Endothelial cell of umbilical vein (primary cell): ENCODE measurements at regions of chr5 and their contacts with region 1.

Region 1: DNA sequence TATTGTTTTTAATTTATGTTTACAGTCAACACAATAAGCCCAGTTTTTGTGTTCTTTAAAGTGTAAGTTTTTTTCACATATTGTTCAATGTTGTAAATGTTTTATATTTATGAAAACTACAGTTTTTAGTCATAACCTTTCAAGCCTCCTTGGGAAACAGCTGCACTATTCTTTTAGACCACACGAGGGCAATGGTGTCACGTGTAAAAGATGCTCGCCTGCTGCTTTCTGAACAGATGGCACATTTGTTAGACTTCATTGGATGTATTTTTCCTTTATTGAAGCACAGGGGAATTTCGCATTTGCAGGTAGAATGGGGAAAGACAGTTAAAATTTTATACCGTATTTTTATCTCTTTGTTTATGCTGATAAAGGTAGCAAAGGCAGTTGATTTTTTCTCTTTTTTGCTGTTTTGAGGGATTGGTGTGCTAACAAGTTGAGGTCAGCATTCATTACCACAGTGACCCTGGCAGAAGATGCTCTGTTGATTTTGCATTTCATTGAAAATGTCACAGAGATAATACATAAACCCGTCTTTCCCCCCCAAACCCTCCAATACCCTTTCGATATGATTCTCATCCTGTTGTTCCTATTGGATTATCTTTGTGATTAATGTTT is 59.0 kb downstream of the MAT2B start:
- DNase-seq: peak; percentile 80
- H3K4me3 ChIP-seq: no peak overlapping the region
- H3K27ac ChIP-seq: peak overlapping the region; percentile 36
- H3K4me1 ChIP-seq: peaks cover 52% of the 10 kb centered on the region
- H3K27me3 ChIP-seq: no peaks in the 10 kb centered on the region
- CTCF ChIP-seq: peak; percentile 60 to 72
- POLR2A ChIP-seq: no peak

Region 2: GRCh38 chr5:163595932-163596607 is 31.6 kb after region 1 on chr5:
- CTCF ChIA-PET with region 1: no interaction called
- POLR2A ChIA-PET with region 1: no interaction called
- dilution Hi-C with region 1: no loop called
- intact Hi-C with region 1: no loop called
- DNase-seq: no peak
- H3K4me3 ChIP-seq: no peak overlapping the region
- H3K27ac ChIP-seq: no peak overlapping the region
- H3K4me1 ChIP-seq: no peaks in the 10 kb centered on the region
- H3K27me3 ChIP-seq: no peaks in the 10 kb centered on the region
- CTCF ChIP-seq: no peak
- POLR2A ChIP-seq: no peak

Region 3: DNA sequence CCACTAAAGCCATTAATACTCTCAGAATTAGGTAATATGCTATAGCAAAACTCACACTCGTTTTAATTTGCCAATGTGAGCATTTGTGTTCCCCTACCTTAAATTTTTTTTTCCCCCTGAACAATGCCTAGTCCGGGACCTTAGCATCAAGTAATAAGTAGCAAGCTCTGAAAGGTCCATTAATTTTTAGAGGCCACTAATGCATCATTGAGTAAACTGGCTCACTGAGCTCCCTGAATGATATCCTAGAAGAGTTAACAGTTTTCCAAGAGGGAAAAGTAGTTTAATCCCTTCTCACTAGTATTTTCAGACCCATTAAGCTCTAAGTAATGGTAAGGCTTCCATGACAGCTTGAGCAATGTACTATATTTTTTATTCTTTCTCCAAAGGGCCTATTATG is 183.2 kb after region 1 on chr5:
- CTCF ChIA-PET with region 1: no interaction called
- POLR2A ChIA-PET with region 1: no interaction called
- dilution Hi-C with region 1: no loop called
- intact Hi-C with region 1: no loop called
- DNase-seq: no peak
- H3K4me3 ChIP-seq: no peak overlapping the region
- H3K27ac ChIP-seq: no peak overlapping the region
- H3K4me1 ChIP-seq: no peaks in the 10 kb centered on the region
- H3K27me3 ChIP-seq: no peaks in the 10 kb centered on the region
- CTCF ChIP-seq: no peak
- POLR2A ChIP-seq: no peak

Region 4: GRCh38 chr5:163760498-163760897 is 196.1 kb after region 1 on chr5:
- CTCF ChIA-PET with region 1: interaction called, 7 read pairs
- POLR2A ChIA-PET with region 1: no interaction called
- dilution Hi-C with region 1: no loop called
- intact Hi-C with region 1: loop called (anchors 1 kb)
- DNase-seq: peak; percentile 99
- H3K4me3 ChIP-seq: peak overlapping the region in 1 of 3 experiments; percentile 2
- H3K27ac ChIP-seq: peak overlapping the region; percentile 95
- H3K4me1 ChIP-seq: peaks cover 47% of the 10 kb centered on the region
- H3K27me3 ChIP-seq: no peaks in the 10 kb centered on the region
- CTCF ChIP-seq: no peak
- POLR2A ChIP-seq: peak; percentile 74

Region 5: DNA sequence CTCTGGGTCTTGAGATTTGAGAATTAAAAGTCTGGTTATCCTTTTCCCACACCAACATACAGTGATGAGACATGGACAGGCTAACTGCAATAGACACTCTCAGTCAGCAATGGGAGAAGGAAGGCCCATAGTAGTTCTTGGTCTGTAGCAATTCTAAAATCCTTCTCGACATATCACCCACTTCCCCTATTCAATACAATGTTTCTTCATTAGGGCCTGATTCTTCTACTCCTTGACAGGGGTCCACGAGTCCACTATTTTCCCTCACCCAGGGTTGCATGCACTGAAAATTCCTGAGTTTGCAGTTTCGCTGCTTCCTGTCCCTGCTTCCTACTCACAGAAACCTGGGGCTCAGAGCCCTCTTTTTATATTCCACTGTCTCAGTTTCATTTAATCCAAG is 343.8 kb after region 1 on chr5:
- CTCF ChIA-PET with region 1: no interaction called
- POLR2A ChIA-PET with region 1: no interaction called
- dilution Hi-C with region 1: no loop called
- intact Hi-C with region 1: no loop called
- DNase-seq: no peak
- H3K4me3 ChIP-seq: no peak overlapping the region
- H3K27ac ChIP-seq: no peak overlapping the region
- H3K4me1 ChIP-seq: no peaks in the 10 kb centered on the region
- H3K27me3 ChIP-seq: no peaks in the 10 kb centered on the region
- CTCF ChIP-seq: no peak
- POLR2A ChIP-seq: no peak

Region 6: DNA sequence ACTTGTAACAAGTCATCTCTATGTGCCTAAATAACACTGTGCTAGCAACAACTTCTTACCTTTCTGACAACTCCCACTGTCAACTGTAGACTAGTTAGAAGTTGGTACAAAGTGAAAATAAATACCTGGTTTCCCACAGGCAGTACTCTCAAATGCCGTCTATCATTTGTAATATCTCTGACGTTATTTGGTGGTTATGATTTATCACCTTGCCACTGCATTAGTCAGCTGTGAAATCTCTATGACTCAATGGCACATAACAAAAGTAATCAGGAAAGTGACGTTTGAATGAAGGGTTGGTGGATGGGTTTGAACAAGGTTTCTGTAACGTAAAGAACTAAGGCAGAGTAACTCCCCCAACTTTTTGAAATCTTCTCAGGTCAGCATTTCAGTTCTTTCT is 533.3 kb after region 1 on chr5:
- CTCF ChIA-PET with region 1: no interaction called
- POLR2A ChIA-PET with region 1: no interaction called
- dilution Hi-C with region 1: no loop called
- intact Hi-C with region 1: loop called (anchors 5 kb)
- DNase-seq: peak; percentile 58
- H3K4me3 ChIP-seq: no peak overlapping the region
- H3K27ac ChIP-seq: no peak overlapping the region
- H3K4me1 ChIP-seq: peaks cover 5% of the 10 kb centered on the region
- H3K27me3 ChIP-seq: no peaks in the 10 kb centered on the region
- CTCF ChIP-seq: no peak
- POLR2A ChIP-seq: no peak

Region 7: DNA sequence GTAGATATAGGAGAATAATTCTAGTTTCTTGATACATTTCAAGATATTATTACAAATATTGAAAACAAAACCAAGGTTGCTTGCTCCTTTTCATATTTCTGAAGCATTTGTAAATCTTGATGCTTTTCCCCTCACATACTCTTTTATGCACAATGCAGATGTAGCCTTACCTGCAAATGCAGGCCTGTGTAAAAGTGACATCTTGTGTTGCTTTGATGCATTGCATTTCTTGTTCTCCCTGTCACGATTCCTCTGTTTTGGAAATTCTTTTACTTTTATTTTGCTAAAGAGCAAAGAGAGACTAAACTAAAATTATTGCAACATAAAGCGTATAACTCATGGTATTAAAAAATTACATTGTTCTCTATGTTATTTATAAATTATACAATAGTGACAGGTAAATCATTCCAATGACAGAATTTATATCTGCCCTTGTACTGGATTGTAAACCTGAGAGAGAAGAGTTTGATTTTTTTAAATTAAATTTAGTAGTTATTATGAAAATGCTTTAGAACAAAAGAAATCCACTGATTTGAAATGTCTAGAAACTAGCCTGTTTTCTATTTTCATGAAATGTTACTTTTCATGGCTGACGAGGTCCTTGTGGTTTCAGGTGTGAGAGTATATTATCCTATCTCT is 911.0 kb after region 1 on chr5:
- CTCF ChIA-PET with region 1: interaction called, 6 read pairs
- POLR2A ChIA-PET with region 1: no interaction called
- dilution Hi-C with region 1: no loop called
- intact Hi-C with region 1: loop called (anchors 1 kb)
- DNase-seq: peak; percentile 47
- H3K4me3 ChIP-seq: no peak overlapping the region
- H3K27ac ChIP-seq: no peak overlapping the region
- H3K4me1 ChIP-seq: no peaks in the 10 kb centered on the region
- H3K27me3 ChIP-seq: no peaks in the 10 kb centered on the region
- CTCF ChIP-seq: peak in 1 of 2 donors; percentile 45
- POLR2A ChIP-seq: no peak

Region 8: DNA sequence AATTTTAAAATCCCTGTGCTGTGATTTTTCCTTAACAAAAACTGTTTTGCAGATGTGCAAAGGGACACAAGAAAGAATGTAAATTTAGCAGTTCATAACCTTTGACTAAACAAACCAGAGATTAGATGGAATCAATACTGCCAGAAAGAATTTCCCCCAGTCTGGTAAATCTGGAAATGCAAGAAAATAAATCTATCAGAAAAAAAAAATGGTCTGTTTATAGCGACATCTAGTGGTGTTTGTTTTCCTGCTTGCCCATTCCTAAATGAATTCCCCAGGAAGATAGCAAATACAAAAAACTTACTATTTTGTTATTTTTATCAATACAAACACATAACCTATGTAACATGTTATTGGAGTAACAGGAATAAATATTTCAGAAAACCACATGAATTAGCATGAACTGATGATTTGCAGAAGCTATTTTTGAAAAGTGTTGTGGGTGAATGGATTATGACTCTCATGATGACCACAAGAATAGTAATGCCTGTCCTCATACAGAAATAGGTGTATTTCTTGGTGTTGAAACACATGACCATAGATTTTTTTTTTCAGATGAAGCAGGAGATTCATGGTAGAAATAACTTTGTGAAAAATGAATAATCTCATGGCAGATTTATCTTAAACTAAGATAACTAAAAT is 1644.8 kb after region 1 on chr5:
- CTCF ChIA-PET with region 1: no interaction called
- POLR2A ChIA-PET with region 1: no interaction called
- dilution Hi-C with region 1: no loop called
- intact Hi-C with region 1: loop called (anchors 1 kb)
- DNase-seq: peak; percentile 24
- H3K4me3 ChIP-seq: no peak overlapping the region
- H3K27ac ChIP-seq: no peak overlapping the region
- H3K4me1 ChIP-seq: no peaks in the 10 kb centered on the region
- H3K27me3 ChIP-seq: no peaks in the 10 kb centered on the region
- CTCF ChIP-seq: peak; percentile 38 to 46
- POLR2A ChIP-seq: no peak